Pancreas (tissue), 10 donors: ENCODE measurements at regions of chr10 and their contacts with region 1.

Region 1: DNA sequence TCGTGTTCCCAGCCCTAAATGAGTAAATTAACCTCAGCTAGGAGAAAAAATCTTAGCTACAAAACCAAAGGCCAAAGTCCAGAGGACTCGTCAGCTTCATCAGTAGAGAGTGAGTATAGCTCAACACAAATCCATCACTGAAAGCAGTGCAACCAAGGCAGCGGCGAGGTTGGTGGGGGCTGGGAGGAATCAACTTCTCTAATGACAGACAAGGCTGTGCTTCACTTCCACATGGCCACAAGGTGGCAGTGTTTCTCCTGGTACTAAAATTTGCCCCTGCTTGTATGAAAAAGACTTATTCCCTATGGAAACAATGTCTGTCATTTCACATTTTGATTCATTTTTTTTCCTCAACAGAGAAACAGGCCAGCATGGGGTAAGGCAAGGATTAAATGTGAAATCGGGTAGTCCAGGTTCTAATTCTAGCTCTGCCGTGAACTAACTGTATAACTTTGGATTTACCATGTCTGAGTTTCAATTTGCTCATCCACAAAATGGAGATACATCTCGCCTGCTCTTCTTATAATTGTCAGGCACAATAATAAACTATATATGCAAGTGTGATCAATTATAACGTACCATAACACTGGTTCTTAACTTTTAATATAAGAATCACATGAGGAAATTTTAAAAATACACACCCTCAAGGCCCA is 39.3 kb downstream of the FAS start:
- DNase-seq: peak; percentile 41 to 73 (median 64)
- ATAC-seq: peak; percentile 75 to 92 (median 90)
- H3K4me3 ChIP-seq: no peak overlapping the region
- H3K27ac ChIP-seq: no peak overlapping the region
- H3K4me1 ChIP-seq: no peaks in the 10 kb centered on the region
- H3K27me3 ChIP-seq: no peaks in the 10 kb centered on the region
- CTCF ChIP-seq: peak; percentile 75 to 91 (median 86)

Region 2: GRCh38 chr10:89122433-89123051 is 92.6 kb after region 1 on chr10:
- intact Hi-C with region 1: no loop called
- DNase-seq: no peak
- ATAC-seq: peak in 2 of 4 donors; percentile 82
- H3K4me3 ChIP-seq: no peak overlapping the region
- H3K27ac ChIP-seq: no peak overlapping the region
- H3K4me1 ChIP-seq: no peaks in the 10 kb centered on the region
- H3K27me3 ChIP-seq: no peaks in the 10 kb centered on the region
- CTCF ChIP-seq: no peak

Region 3: DNA sequence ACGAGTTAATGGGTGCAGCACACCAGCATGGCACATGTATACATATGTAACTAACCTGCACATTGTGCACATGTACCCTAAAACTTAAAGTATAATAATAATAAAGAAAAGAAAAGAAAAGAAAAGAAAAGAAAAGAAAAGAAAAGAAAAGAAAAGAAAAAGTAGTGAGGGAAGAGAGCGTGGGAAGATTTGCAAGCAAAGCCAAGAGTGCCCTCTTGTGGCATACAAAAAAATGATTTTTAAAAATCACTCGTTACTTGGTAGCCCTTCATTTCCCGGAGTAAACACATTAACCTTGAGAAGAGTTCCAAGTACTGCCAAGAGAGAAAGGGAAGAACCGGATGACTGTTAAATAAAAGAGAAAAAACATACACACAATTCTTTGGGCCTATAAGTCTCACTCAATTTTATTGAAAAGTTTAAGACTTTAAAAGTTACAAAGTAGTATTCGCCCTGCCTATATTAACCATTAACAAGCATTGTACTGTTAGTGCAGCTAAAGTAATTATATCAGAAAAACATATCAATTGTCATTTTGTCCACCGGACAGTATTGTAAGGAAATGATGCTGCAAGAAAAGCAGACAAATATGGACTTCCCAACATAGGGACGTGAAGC is 183.4 kb after region 1 on chr10:
- intact Hi-C with region 1: loop called in 1 of 3 experiments (anchors 5 kb)
- DNase-seq: no peak
- ATAC-seq: peak; percentile 81 to 90 (median 83)
- H3K4me3 ChIP-seq: no peak overlapping the region
- H3K27ac ChIP-seq: no peak overlapping the region
- H3K4me1 ChIP-seq: peaks cover 0 to 13% (median 10%) of the 10 kb centered on the region in 3 donors
- H3K27me3 ChIP-seq: peaks cover 0 to 5% (median 0%) of the 10 kb centered on the region in 4 donors
- CTCF ChIP-seq: peak in 3 of 4 donors; percentile 31 to 51 (median 31)

Region 4: DNA sequence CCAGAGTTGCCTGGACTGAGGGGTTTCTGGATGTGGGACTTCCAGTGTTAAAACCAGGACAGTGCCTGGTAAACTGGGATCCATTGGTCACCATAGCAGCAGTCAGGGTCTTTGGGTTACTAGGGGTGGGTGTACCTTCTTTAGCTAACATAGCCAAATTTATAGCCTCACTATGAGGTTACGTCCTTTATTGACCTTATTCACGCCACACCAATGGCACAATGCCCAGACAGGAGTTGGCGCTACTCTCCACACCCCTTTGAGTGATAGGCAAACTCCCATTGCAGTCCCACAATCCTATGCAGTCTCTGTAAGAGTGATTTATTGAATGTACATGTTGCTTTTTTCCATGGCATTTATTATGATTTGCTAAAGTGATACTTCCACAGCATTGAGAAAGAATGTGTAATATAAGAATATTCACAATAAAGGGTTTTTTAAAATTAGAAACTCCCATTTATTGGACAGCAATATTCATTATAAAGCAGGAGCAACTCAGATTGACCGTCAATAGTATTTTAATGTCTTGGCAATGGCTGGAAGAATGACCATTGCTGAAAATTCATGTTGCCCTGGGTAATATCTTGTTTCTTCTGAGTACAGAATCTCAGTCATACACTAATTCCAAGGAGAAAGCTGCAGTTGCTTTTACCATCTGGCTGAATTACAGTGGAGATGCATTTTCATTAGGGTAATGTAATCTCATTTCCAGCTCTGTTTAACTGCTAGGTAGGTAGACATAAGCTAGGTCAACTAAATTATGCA is 410.5 kb after region 1 on chr10:
- intact Hi-C with region 1: no loop called
- DNase-seq: peak in 5 of 6 donors; percentile 51 to 68 (median 64)
- ATAC-seq: peak; percentile 84 to 96 (median 92)
- H3K4me3 ChIP-seq: no peak overlapping the region
- H3K27ac ChIP-seq: no peak overlapping the region
- H3K4me1 ChIP-seq: no peaks in the 10 kb centered on the region
- H3K27me3 ChIP-seq: no peaks in the 10 kb centered on the region
- CTCF ChIP-seq: no peak